Dendritic cell treated with granulocyte-macrophage colony-stimulating factor and Interleukin-4, amounts not matched to agents 40 ng/mL and 50 ng/mL, for 4 days (primary cell): ENCODE measurements at regions of chr14 and their contacts with region 1.

Region 1: DNA sequence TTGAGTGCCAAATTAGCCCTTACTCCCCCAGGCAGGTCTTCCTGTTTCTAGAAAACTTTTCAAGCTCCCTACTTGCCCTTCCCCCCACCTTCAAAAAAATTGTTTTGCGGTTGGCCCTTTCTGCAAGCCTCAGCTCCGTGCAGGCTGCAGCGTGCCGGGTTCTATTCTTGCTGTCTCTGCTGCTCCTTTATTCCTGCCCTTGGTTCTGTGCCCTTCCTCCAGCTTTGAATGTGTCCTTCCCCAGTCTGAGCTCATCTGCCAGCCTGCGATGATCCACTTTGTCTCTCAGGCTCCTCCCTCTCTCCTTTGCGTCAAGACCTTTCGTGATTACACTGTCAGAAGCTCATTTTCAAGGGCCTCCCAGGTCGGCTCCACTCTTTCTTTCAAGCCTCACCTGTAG is 98.6 kb downstream of the IRF2BPL start:
- H3K4me3 Mint-ChIP-seq: peak overlapping the region; percentile 60
- H3K27ac Mint-ChIP-seq: peak overlapping the region; percentile 88
- H3K4me1 Mint-ChIP-seq: peaks cover 63% of the 10 kb centered on the region
- H3K27me3 Mint-ChIP-seq: peaks cover 27% of the 10 kb centered on the region

Region 2: DNA sequence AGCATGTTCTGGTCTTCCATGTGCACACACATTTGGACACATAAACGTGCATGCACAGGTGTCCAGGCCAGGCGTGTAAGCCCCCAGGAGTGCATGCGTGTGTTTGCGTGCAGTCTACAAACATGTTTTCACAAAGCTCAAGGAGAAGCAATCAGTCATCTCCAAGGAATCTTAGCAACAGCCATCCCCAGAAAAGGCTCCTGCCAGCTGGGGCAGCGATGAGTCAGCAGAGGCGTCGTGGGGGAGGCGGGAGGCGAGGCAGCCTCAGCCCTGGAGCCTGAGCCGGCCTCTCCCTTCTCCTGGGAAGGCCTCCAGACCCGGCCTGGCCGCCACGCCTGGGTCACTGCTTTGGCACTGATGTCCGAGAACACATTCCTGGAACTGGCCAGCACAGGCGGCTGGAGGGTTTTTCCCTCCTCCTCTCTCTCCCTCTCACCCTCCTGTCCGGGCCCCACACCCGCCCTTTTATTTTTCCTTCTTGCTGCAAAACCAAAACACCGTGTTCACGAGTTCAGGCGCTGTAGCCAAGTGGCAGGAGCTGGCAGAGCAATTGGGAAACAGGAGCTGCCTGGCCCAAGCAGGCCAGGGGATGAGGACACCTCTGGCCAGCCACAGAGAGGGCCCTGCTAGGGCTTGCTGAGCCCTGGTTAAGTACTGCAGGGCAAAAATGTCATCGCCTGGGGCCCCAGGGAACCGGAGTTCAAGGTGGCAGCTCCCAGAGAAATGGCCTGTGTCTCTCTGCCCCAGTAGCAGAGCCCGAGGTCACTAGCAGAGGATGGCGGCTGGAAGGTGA is 11.0 kb before region 1 on chr14:
- intact Hi-C with region 1: loop called (anchors 1 kb)
- H3K4me3 Mint-ChIP-seq: peak overlapping the region; percentile 30
- H3K27ac Mint-ChIP-seq: peak overlapping the region; percentile 96
- H3K4me1 Mint-ChIP-seq: peaks cover 76% of the 10 kb centered on the region
- H3K27me3 Mint-ChIP-seq: peaks cover 23% of the 10 kb centered on the region